ENCODE measurements at regions of chrX and their contacts with region 1.

Region 1: GRCh38 chrX:49120099-49120498 is 3.4 kb downstream of the GPKOW start:
- DNase-seq: no peak
- ATAC-seq: no peak
- H3K4me3 ChIP-seq: no peak overlapping the region
- H3K4me3 Mint-ChIP-seq: peak overlapping the region; percentile 72
- H3K27ac ChIP-seq: no peak overlapping the region
- H3K27ac Mint-ChIP-seq: no peak overlapping the region
- H3K4me1 ChIP-seq: peaks cover 39% of the 10 kb centered on the region
- H3K4me1 Mint-ChIP-seq: peaks cover 40% of the 10 kb centered on the region
- H3K27me3 ChIP-seq: no peaks in the 10 kb centered on the region
- H3K27me3 Mint-ChIP-seq: no peaks in the 10 kb centered on the region
- CTCF ChIP-seq: no peak

Region 2: GRCh38 chrX:49002091-49002935 is 117.8 kb before region 1 on chrX and contains the start of gene GRIPAP1:
- CTCF ChIA-PET with region 1: no interaction called
- POLR2A ChIA-PET with region 1: no interaction called
- intact Hi-C with region 1: loop called in 1 of 2 experiments (anchors 5 kb)
- DNase-seq: peak; percentile 61 to 93 (median 72)
- ATAC-seq: peak; percentile 77
- H3K4me3 ChIP-seq: peak within 1 kb of the TSS; percentile 93
- H3K4me3 Mint-ChIP-seq: peak within 1 kb of the TSS; percentile 96
- H3K27ac ChIP-seq: peak within 1 kb of the TSS; percentile 84 to 96
- H3K27ac Mint-ChIP-seq: peak within 1 kb of the TSS; percentile 98
- H3K4me1 ChIP-seq: peaks cover 27% of the 10 kb centered on the region
- H3K4me1 Mint-ChIP-seq: peaks cover 26% of the 10 kb centered on the region
- H3K27me3 ChIP-seq: no peaks in the 10 kb centered on the region
- H3K27me3 Mint-ChIP-seq: no peaks in the 10 kb centered on the region
- CTCF ChIP-seq: no peak
- total RNA-seq, gene GRIPAP1: 100 to 101 TPM

Region 3: DNA sequence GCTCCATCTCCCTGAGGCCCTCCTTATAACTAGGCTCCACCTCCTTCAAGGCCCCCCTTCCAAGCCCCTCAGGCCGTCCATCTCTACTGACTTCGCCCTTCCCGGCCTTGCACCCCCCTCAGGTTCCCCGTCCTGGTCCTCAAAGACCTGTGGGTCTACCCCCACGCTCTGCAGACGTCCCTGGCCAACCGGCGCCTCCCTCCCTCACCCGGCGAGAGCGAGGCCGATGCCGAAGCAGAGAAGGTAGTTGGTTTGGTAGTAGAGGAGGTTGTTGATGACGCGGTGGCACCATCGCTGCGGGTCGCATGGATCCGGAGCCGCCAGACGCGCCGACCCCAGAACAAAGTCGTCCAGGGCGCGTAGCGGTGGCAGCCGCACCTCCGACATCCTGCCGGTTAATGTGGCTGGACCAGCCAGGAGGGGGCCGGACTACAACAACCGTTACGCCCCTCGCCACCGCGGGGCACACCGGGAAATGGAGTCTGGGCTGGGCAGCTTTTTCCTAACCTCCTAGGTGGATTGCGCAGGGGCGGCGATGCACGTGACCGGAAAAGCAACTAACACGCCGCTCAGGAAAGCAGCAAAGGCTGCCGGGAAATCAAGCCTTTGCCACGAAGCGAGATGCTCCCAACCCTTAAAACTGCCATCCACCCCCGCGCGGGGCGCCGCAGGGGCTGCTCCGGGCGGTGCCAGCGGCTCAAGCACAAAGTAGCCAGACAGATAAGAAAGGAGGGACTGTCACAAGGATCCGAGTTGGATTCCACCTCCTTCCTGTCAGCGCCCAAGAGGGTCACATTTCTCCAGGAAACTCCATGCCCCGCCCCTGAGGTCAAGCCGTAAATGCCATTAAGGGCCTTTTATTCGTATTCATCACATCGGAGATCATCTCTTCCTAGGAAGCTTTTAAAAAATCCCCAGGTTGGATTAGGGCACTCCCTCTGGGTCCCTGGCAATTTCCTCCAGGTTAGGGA is 46.2 kb before region 1 on chrX and contains the start of gene PRAF2:
- CTCF ChIA-PET with region 1: no interaction called
- POLR2A ChIA-PET with region 1: no interaction called
- intact Hi-C with region 1: loop called in 1 of 2 experiments (anchors 1 kb)
- DNase-seq: peak; percentile 75 to 95 (median 88)
- ATAC-seq: peak; percentile 98
- H3K4me3 ChIP-seq: peak within 1 kb of the TSS; percentile 72
- H3K4me3 Mint-ChIP-seq: peak within 1 kb of the TSS; percentile 84
- H3K27ac ChIP-seq: peak within 1 kb of the TSS; percentile 60 to 66
- H3K27ac Mint-ChIP-seq: peak within 1 kb of the TSS; percentile 91
- H3K4me1 ChIP-seq: peaks cover 25% of the 10 kb centered on the region
- H3K4me1 Mint-ChIP-seq: peaks cover 20% of the 10 kb centered on the region
- H3K27me3 ChIP-seq: no peaks in the 10 kb centered on the region
- H3K27me3 Mint-ChIP-seq: no peaks in the 10 kb centered on the region
- CTCF ChIP-seq: no peak
- total RNA-seq, gene PRAF2: 17.1 to 21.0 TPM

Region 4: DNA sequence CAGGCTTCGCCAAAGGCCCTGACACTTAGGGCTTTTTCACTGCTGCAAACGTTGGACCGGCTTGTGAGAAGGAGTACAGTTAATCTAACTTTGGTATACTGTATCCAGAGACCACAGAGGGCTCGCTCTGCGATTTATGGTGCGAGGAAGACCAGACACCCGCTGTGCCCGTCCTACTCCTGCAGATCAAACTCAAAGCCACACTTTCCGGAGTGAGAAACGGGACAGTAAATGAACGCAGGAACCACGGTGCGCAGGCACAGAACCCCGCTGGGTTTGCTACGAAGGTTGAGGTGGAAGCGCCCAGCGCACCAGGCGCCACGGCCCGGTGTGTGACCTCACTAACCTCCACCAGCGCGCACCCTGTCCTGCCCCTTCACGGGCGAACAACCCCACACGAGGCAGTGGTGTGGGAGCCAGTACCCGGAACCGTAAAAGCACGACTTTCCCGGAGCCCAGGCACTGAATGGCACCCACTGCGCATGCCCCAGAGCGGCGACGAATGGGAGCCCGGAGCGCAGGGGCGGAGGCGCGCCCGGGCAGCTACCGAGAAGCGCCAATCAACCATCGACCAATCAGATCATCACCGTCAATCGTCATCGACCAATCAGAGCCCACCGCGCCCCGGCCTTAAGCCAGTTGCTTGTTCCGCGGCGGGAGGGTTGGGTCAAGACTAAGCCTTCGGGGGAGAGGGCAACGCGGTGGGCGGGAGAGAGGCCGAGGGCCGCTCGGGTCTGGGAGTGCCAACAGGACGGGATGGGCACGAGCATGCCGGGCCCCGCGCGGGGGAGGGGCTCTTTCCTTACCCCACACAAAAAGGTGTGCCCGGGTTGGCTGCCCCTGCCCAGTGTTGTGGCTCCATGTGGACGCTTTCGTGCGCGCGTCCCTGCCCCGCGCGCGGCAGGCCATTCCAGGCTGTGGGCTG is 19.1 kb before region 1 on chrX:
- CTCF ChIA-PET with region 1: no interaction called
- POLR2A ChIA-PET with region 1: no interaction called
- intact Hi-C with region 1: loop called in 1 of 2 experiments (anchors 2 kb)
- DNase-seq: peak; percentile 75 to 95 (median 84)
- ATAC-seq: peak; percentile 90
- H3K4me3 ChIP-seq: peak overlapping the region; percentile 66
- H3K4me3 Mint-ChIP-seq: peak overlapping the region; percentile 94
- H3K27ac ChIP-seq: peak overlapping the region; percentile 75 to 81
- H3K27ac Mint-ChIP-seq: peak overlapping the region; percentile 87
- H3K4me1 ChIP-seq: peaks cover 17% of the 10 kb centered on the region
- H3K4me1 Mint-ChIP-seq: peaks cover 11% of the 10 kb centered on the region
- H3K27me3 ChIP-seq: no peaks in the 10 kb centered on the region
- H3K27me3 Mint-ChIP-seq: no peaks in the 10 kb centered on the region
- CTCF ChIP-seq: no peak

Region 5: GRCh38 chrX:49155900-49156837 is 36.1 kb after region 1 on chrX:
- CTCF ChIA-PET with region 1: interaction called, 4 read pairs
- POLR2A ChIA-PET with region 1: no interaction called
- intact Hi-C with region 1: loop called (anchors 1 to 2 kb)
- DNase-seq: peak; percentile 74 to 92 (median 83)
- ATAC-seq: peak; percentile 91
- H3K4me3 ChIP-seq: peak overlapping the region; percentile 61
- H3K4me3 Mint-ChIP-seq: peak overlapping the region; percentile 94
- H3K27ac ChIP-seq: peak overlapping the region; percentile 65 to 79
- H3K27ac Mint-ChIP-seq: peak overlapping the region; percentile 99
- H3K4me1 ChIP-seq: peaks cover 14% of the 10 kb centered on the region
- H3K4me1 Mint-ChIP-seq: peaks cover 20% of the 10 kb centered on the region
- H3K27me3 ChIP-seq: no peaks in the 10 kb centered on the region
- H3K27me3 Mint-ChIP-seq: no peaks in the 10 kb centered on the region
- CTCF ChIP-seq: peak; percentile 61

Measured in CD4-positive, alpha-beta T cell (primary cell).